BJ (cell line): ENCODE measurements at regions of chr5 and their contacts with region 1.

Region 1: GRCh38 chr5:111735583-111736270 is 21.3 kb downstream of the NREP start:
- DNase-seq: peak; percentile 76
- H3K4me3 ChIP-seq: no peak overlapping the region
- H3K27me3 ChIP-seq: no peaks in the 10 kb centered on the region
- CTCF ChIP-seq: no peak

Region 2: GRCh38 chr5:111641533-111642230 is 94.0 kb before region 1 on chr5:
- CTCF ChIA-PET with region 1: no interaction called
- POLR2A ChIA-PET with region 1: no interaction called
- DNase-seq: peak; percentile 90
- H3K4me3 ChIP-seq: no peak overlapping the region
- H3K27me3 ChIP-seq: peaks cover 2% of the 10 kb centered on the region
- CTCF ChIP-seq: no peak

Region 3: DNA sequence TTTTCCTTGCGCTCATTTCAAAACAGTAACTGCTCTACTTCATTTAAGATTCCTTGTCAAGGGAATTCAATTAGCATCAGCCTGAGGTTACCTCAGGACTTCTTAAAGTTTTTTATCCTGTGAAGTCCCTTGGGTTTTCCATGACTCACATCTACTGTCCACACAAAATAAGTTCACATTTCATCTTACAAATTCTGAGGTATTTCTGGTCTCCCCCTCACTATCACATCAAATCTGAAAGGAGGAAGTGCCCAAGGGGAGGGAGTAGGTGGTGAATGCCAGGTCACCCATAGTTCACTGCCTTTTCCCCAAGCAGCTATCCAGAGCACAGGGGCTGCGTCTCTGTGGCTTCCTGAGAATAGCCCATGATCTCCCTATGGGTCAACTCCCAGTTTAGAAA is 248.3 kb after region 1 on chr5:
- CTCF ChIA-PET with region 1: no interaction called
- POLR2A ChIA-PET with region 1: interaction called, 10 read pairs
- DNase-seq: peak; percentile 92
- H3K4me3 ChIP-seq: no peak overlapping the region
- H3K27me3 ChIP-seq: no peaks in the 10 kb centered on the region
- CTCF ChIP-seq: no peak

Region 4: GRCh38 chr5:112146323-112147226 is 410.8 kb after region 1 on chr5:
- CTCF ChIA-PET with region 1: no interaction called
- POLR2A ChIA-PET with region 1: interaction called, 13 read pairs
- DNase-seq: peak; percentile 80
- H3K4me3 ChIP-seq: no peak overlapping the region
- H3K27me3 ChIP-seq: no peaks in the 10 kb centered on the region
- CTCF ChIP-seq: peak; percentile 65